Activated CD4-positive, alpha-beta memory T cell treated with anti-CD3 and anti-CD28 coated beads for 36 hours (primary cell): ENCODE measurements at regions of chr20 and their contacts with region 1.

Region 1: DNA sequence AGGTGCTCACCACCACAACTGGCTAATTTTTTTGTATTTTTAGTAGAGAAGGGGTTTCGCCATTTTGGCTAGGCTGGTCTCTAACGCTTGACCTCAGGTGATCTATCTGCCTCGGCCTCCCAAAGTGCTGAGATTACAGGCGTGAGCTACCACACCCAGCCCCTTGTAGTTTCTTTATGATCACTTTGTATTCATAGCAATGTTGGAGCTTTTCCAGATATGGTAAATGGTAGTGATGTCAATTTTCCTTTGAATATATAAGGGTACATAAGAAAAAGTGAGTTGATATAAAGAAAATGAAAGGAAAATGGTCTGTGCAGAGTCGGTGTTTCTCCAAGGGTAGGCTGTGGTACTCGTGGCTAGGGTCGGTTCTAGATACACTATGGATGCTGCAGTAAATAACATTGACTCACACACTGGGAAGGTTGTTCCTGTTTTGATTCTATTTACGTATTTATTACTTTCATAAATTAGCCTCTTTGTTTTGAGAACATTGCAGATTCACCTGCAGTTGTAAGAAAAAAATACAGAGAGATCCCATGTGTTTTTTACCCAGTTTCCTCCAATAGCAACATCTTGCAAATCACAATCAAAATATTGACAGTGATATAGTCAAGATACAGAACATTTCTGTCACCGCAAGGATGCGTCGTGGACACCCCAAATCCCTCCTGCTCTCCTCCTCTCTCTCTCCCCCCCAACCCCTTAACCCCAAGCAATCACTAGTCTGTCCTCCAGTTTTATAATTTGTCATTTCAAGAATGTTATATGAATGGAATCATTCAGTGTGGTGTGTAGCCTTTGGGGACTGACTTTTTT is 2.5 kb downstream of the ZNF831 start:
- DNase-seq: peak; percentile 65
- H3K4me3 Mint-ChIP-seq: peak overlapping the region; percentile 77
- H3K27ac Mint-ChIP-seq: peak overlapping the region; percentile 96
- H3K4me1 Mint-ChIP-seq: peaks cover 77% of the 10 kb centered on the region
- H3K27me3 Mint-ChIP-seq: no peaks in the 10 kb centered on the region

Region 2: DNA sequence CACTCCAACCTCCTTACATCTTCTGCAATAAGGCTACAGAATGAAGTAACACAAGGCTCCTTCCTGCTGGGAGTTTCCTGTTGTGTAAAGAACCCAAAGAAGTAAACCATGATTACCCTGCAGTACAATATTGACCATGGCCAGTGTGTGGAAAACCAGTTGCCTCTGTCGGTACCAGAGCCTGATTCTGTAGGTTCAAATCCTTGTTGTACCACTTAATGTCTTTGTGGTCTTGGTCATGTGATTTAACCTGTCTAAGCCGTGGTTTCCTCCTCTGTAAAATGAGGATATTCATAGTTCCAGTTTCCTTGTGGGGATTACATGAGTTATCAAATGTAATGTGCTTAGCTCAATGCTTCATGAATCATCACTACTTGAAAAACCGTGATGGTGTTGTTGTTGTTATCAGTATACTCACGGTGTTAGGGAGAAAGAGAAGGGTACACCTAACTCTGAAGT is 63.2 kb before region 1 on chr20:
- CTCF ChIA-PET with region 1: no interaction called
- POLR2A ChIA-PET with region 1: no interaction called
- intact Hi-C with region 1: loop called (anchors 2 kb)
- DNase-seq: no peak
- H3K4me3 Mint-ChIP-seq: no peak overlapping the region
- H3K27ac Mint-ChIP-seq: peak overlapping the region; percentile 18
- H3K4me1 Mint-ChIP-seq: peaks cover 13% of the 10 kb centered on the region
- H3K27me3 Mint-ChIP-seq: no peaks in the 10 kb centered on the region

Region 3: GRCh38 chr20:59120491-59120890 is 45.6 kb before region 1 on chr20:
- CTCF ChIA-PET with region 1: interaction called, 15 read pairs
- POLR2A ChIA-PET with region 1: interaction called, 22 read pairs
- intact Hi-C with region 1: loop called (anchors 2 kb)
- DNase-seq: peak; percentile 65
- H3K4me3 Mint-ChIP-seq: no peak overlapping the region
- H3K27ac Mint-ChIP-seq: peak overlapping the region; percentile 94
- H3K4me1 Mint-ChIP-seq: peaks cover 71% of the 10 kb centered on the region
- H3K27me3 Mint-ChIP-seq: no peaks in the 10 kb centered on the region

Region 4: GRCh38 chr20:59149651-59150504 is 16.2 kb before region 1 on chr20:
- CTCF ChIA-PET with region 1: interaction called, 32 read pairs
- POLR2A ChIA-PET with region 1: interaction called, 97 read pairs
- intact Hi-C with region 1: loop called (anchors 1 kb)
- DNase-seq: peak; percentile 85
- H3K4me3 Mint-ChIP-seq: peak overlapping the region; percentile 62
- H3K27ac Mint-ChIP-seq: peak overlapping the region; percentile 92
- H3K4me1 Mint-ChIP-seq: peaks cover 88% of the 10 kb centered on the region
- H3K27me3 Mint-ChIP-seq: no peaks in the 10 kb centered on the region

Region 5: DNA sequence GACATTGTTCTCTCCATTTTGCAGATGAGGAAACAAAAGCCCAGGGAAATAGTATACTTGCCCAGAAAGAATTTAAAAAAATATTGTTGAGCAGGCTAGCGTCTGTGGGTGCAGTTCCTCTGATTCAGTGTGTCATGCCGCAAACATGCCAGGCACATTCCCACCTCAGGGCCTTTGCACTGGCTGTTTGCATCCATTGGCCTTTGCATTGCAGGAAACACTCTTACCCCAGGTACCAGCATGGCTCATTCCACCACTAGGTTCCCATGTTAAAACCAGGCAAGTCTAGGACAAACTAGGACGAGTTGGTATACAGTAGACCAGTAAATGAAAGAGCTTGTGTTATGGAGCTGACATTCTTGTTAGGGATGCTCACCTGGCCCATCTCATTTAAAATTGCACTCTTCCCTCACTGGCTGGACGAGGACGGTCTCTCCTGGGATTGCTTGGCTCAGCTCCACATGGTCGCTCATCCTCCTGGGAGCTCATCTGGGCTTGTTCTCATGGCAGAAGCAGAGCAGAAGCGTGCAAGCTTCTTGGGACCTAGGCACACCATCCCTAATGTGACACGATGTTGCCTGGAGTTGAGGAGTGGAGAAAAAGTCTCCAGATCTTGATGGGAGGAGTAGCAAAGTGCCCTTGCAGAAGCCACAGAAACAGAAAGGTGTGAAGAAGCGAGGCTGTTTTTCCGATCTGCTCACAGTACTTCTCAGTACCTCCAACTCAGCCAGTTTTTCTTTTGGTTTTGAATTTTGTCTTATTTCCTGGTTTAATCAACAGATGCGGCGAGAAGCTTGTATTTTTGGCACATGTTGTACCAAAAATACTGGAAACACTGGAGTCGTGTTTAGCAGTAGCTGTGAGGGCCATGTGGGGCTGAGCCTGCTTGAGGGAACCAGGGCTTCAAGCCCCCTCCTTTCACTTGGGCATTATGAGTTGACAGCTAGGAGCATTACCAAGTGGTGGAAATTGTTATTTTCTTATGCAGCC is 11.5 kb after region 1 on chr20:
- CTCF ChIA-PET with region 1: interaction called, 8 read pairs
- POLR2A ChIA-PET with region 1: interaction called, 12 read pairs
- intact Hi-C with region 1: loop called (anchors 1 kb)
- DNase-seq: peak; percentile 63
- H3K4me3 Mint-ChIP-seq: peak overlapping the region; percentile 67
- H3K27ac Mint-ChIP-seq: peak overlapping the region; percentile 93
- H3K4me1 Mint-ChIP-seq: peaks cover 84% of the 10 kb centered on the region
- H3K27me3 Mint-ChIP-seq: no peaks in the 10 kb centered on the region

Region 6: DNA sequence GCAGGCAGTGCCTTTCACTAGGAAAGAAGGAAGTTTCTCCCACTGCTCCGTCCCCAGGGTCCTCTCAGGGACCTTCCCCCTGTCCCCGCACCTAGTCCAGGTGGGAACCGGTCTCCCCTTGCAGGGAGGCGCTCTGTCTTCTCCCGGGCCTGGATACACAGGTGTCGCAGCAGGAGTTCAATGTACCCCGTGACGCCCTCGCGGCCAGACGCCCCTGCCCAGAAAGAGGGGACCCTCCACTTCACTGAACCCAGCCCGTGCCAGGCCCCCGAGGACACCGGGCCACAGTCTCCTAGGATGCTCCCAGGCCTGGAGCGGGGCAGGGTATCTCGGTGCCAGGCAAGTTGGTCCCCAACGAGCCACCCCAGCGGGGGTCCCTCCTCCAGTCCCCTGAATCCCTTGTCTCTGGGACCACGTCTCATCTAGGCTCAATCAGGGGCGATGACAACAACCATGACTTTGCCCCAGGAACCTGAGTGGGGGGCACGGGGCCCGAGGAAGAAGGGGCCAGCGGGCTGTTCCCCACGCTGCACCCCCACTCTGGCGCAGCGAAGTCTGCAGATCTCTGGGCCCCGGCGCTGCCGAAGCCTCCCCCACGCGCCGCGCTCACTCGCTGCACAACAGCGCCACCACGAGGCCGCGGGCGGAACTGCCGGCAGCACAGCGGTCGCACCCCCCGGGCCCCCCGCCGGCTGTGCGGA is 237.3 kb after region 1 on chr20:
- CTCF ChIA-PET with region 1: no interaction called
- POLR2A ChIA-PET with region 1: no interaction called
- intact Hi-C with region 1: loop called (anchors 5 kb)
- DNase-seq: peak; percentile 77
- H3K4me3 Mint-ChIP-seq: peak overlapping the region; percentile 57
- H3K27ac Mint-ChIP-seq: no peak overlapping the region
- H3K4me1 Mint-ChIP-seq: peaks cover 2% of the 10 kb centered on the region
- H3K27me3 Mint-ChIP-seq: peaks cover 14% of the 10 kb centered on the region